GM23248 (cell line): ENCODE measurements at regions of chr19 and their contacts with region 1.

Region 1: GRCh38 chr19:11035441-11036377 is 53.6 kb upstream of the LDLR start:
- DNase-seq: peak; percentile 89
- H3K4me3 ChIP-seq: no peak overlapping the region
- H3K27ac ChIP-seq: no peak overlapping the region
- H3K4me1 ChIP-seq: no peaks in the 10 kb centered on the region
- H3K27me3 ChIP-seq: no peaks in the 10 kb centered on the region

Region 2: DNA sequence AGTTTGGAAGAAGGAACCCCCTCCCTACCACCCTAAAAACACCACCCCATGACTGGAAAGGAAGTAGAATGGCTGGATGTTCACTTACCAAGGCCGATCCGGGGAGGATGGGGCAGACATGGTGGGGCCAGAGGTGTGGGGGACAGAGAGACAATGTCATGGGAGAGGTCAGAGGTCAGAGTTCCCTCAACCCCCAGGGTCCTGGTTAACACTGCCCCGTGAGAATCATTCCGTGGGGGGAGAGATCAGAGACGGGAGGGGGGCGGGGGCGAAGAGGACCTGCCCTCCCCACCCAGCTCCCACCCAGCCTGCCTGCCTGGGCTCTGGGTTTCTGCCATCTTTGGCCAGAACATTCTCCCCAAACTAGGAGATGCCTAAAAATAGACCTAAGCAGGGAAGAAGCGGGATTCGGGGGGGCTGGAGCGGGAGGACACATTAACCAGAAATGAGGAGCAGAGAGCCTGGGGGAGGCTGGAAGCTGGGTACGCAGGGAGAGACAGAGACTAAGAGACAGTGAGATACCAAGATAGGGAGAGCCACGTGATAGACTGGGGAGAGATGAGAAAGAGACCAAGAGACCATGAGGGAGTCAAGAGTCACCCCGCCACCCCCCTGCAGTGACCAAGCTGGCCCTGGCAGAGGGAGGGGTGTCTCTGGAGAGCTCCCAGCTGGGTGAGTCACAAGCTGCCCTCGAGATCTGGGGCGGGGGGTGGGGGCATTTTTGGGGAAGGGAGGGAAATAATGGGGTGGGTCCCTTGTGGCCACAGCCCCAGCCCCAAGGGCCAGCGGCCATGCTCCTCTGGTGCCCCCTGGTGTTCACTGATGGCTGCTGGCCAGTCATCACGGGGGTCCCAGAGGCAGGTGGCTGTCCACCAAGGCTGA is 167.7 kb after region 1 on chr19:
- in situ Hi-C with region 1: loop called (anchors 10 kb)
- DNase-seq: peak; percentile 82
- H3K4me3 ChIP-seq: no peak overlapping the region
- H3K27ac ChIP-seq: peak overlapping the region; percentile 61
- H3K4me1 ChIP-seq: peaks cover 8% of the 10 kb centered on the region
- H3K27me3 ChIP-seq: no peaks in the 10 kb centered on the region